Lower leg skin (tissue), 4 donors: ENCODE measurements at regions of chr5 and their contacts with region 1.

Region 1: DNA sequence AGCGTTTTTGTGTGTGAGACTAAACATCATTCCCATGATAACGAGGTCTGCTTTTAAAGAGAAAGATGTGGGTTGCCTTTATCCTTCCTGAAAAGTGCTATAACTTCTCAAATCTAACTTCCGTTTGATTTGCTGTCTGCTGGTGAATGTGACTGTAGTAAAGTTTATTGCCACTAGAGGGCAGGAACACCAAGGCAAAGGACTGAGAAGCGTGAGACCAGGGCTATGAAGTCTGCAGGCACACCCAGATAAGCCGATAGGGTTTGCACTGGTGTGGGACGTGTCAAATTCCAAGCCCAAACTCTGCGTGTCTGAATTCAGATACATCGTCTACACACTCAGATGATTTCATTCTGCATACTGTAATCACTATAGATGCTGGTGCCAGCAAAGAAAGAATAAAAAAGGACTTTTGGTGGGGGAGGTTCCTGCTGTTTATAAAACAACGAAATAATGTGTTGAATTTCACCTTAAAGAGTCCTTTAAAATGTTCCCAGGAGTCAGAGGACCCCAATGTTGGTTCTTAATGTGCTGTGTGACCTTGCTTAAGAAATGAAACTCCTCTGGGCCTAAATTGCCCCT is 87.2 kb downstream of the PTTG1 start:
- DNase-seq: peak in 1 of 2 donors; percentile 59
- H3K4me3 ChIP-seq: no peak overlapping the region
- CTCF ChIP-seq: peak in 1 of 3 donors; percentile 61
- POLR2A ChIP-seq: no peak

Region 2: GRCh38 chr5:162334944-162335343 is 1826.1 kb after region 1 on chr5:
- intact Hi-C with region 1: loop called (anchors 10 kb)
- DNase-seq: no peak
- H3K4me3 ChIP-seq: no peak overlapping the region
- CTCF ChIP-seq: no peak
- POLR2A ChIP-seq: no peak